Caco-2 (cell line): ENCODE measurements at regions of chr11 and their contacts with region 1.

Region 1: DNA sequence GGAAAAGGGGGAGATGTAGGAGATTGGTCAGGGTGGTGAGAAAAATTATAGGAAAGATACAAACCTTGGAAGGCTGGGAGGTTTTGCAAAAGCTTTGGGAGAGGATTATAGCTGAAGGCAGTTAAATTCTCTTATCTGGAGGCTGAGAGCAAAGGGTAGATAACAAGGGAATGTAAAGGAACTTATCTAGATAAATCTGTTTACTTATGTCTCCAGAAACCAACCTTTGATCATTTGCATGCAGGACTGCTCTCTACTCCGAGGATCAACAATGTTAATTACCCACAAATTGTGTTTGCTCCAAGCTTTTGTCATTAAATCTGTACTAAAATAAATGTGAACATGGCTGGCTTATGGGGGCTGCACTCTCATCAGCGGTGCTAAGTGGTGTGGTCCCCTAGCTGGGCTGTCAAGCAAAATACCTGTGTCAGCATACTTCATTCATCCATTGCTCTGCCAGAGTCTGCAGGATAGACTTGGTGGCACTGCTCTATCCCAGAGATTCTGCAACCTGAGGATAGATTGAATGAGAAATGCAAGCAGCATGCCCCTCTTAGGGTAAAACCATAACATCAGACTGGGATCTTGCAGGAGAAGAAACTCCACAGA is 1599.2 kb upstream of the TENM4 start:
- DNase-seq: peak; percentile 64 to 70
- H3K4me3 ChIP-seq: no peak overlapping the region
- H3K4me3 Mint-ChIP-seq: peak overlapping the region; percentile 20
- H3K27ac Mint-ChIP-seq: peak overlapping the region; percentile 16
- H3K4me1 ChIP-seq: peaks cover 45% of the 10 kb centered on the region
- H3K4me1 Mint-ChIP-seq: peaks cover 47% of the 10 kb centered on the region
- H3K27me3 ChIP-seq: peaks cover 2% of the 10 kb centered on the region; the same call in 1 of the 2 replicates
- H3K27me3 Mint-ChIP-seq: no peaks in the 10 kb centered on the region
- CTCF ChIP-seq: no peak

Region 2: GRCh38 chr11:80993536-80993935 is 46.5 kb before region 1 on chr11:
- CTCF ChIA-PET with region 1: no interaction called
- POLR2A ChIA-PET with region 1: no interaction called
- intact Hi-C with region 1: no loop called
- DNase-seq: no peak
- H3K4me3 ChIP-seq: no peak overlapping the region
- H3K4me3 Mint-ChIP-seq: no peak overlapping the region
- H3K27ac Mint-ChIP-seq: no peak overlapping the region
- H3K4me1 ChIP-seq: no peaks in the 10 kb centered on the region
- H3K4me1 Mint-ChIP-seq: peaks cover 6% of the 10 kb centered on the region
- H3K27me3 ChIP-seq: no peaks in the 10 kb centered on the region
- H3K27me3 Mint-ChIP-seq: no peaks in the 10 kb centered on the region
- CTCF ChIP-seq: no peak

Region 3: GRCh38 chr11:81112718-81113117 is 72.7 kb after region 1 on chr11:
- CTCF ChIA-PET with region 1: no interaction called
- POLR2A ChIA-PET with region 1: no interaction called
- intact Hi-C with region 1: no loop called
- DNase-seq: no peak
- H3K4me3 ChIP-seq: no peak overlapping the region
- H3K4me3 Mint-ChIP-seq: no peak overlapping the region
- H3K27ac Mint-ChIP-seq: no peak overlapping the region
- H3K4me1 ChIP-seq: no peaks in the 10 kb centered on the region
- H3K4me1 Mint-ChIP-seq: no peaks in the 10 kb centered on the region
- H3K27me3 ChIP-seq: no peaks in the 10 kb centered on the region
- H3K27me3 Mint-ChIP-seq: no peaks in the 10 kb centered on the region
- CTCF ChIP-seq: no peak

Region 4: GRCh38 chr11:81174646-81175330 is 134.8 kb after region 1 on chr11:
- CTCF ChIA-PET with region 1: no interaction called
- POLR2A ChIA-PET with region 1: no interaction called
- intact Hi-C with region 1: loop called (anchors 1 kb)
- DNase-seq: peak in 1 of 2 experiments; percentile 25
- H3K4me3 ChIP-seq: no peak overlapping the region
- H3K4me3 Mint-ChIP-seq: no peak overlapping the region
- H3K27ac Mint-ChIP-seq: no peak overlapping the region
- H3K4me1 ChIP-seq: peaks cover 29% of the 10 kb centered on the region
- H3K4me1 Mint-ChIP-seq: peaks cover 18% of the 10 kb centered on the region
- H3K27me3 ChIP-seq: no peaks in the 10 kb centered on the region
- H3K27me3 Mint-ChIP-seq: no peaks in the 10 kb centered on the region
- CTCF ChIP-seq: no peak